Calu3 (cell line): ENCODE measurements at regions of chr1 and their contacts with region 1.

Region 1: GRCh38 chr1:184176058-184176457 is 124.5 kb downstream of the TSEN15 start:
- DNase-seq: no peak
- H3K4me3 Mint-ChIP-seq: no peak overlapping the region
- H3K27ac Mint-ChIP-seq: no peak overlapping the region
- H3K4me1 Mint-ChIP-seq: no peaks in the 10 kb centered on the region
- H3K27me3 Mint-ChIP-seq: no peaks in the 10 kb centered on the region
- CTCF ChIP-seq: no peak

Region 2: GRCh38 chr1:184127520-184127919 is 48.5 kb before region 1 on chr1:
- CTCF ChIA-PET with region 1: no interaction called
- intact Hi-C with region 1: loop called (anchors 2 kb)
- DNase-seq: no peak
- H3K4me3 Mint-ChIP-seq: no peak overlapping the region
- H3K27ac Mint-ChIP-seq: no peak overlapping the region
- H3K4me1 Mint-ChIP-seq: no peaks in the 10 kb centered on the region
- H3K27me3 Mint-ChIP-seq: no peaks in the 10 kb centered on the region
- CTCF ChIP-seq: no peak

Region 3: DNA sequence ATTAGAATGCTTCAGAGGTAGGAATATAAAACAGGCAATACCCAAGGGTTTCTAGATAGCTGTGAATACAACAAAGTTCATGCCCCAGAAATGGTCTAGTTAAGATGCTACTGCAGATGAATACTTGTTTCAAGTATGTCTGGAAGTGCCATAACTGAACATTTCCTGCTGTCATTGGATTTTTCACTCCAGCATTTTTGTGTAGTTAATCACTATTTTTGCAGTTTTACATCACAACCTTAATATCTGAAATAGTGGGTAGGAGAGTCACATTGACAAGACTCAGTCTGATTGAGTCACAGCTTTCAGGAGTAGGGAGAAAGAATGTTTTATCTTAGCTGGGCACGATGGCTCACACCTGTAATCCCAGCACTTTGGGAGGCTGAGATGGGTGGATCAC is 84.3 kb after region 1 on chr1:
- CTCF ChIA-PET with region 1: no interaction called
- intact Hi-C with region 1: no loop called
- DNase-seq: no peak
- H3K4me3 Mint-ChIP-seq: no peak overlapping the region
- H3K27ac Mint-ChIP-seq: no peak overlapping the region
- H3K4me1 Mint-ChIP-seq: no peaks in the 10 kb centered on the region
- H3K27me3 Mint-ChIP-seq: peaks cover 70% of the 10 kb centered on the region
- CTCF ChIP-seq: no peak